Panc1 (cell line): ENCODE measurements at regions of chr18 and their contacts with region 1.

Region 1: GRCh38 chr18:49597157-49597931 is 35.5 kb downstream of the LIPG start:
- DNase-seq: no peak
- ATAC-seq: peak; percentile 88
- H3K4me3 ChIP-seq: no peak overlapping the region
- H3K27ac ChIP-seq: peak overlapping the region; percentile 65
- H3K4me1 ChIP-seq: no peaks in the 10 kb centered on the region
- H3K27me3 ChIP-seq: no peaks in the 10 kb centered on the region
- CTCF ChIP-seq: no peak

Region 2: DNA sequence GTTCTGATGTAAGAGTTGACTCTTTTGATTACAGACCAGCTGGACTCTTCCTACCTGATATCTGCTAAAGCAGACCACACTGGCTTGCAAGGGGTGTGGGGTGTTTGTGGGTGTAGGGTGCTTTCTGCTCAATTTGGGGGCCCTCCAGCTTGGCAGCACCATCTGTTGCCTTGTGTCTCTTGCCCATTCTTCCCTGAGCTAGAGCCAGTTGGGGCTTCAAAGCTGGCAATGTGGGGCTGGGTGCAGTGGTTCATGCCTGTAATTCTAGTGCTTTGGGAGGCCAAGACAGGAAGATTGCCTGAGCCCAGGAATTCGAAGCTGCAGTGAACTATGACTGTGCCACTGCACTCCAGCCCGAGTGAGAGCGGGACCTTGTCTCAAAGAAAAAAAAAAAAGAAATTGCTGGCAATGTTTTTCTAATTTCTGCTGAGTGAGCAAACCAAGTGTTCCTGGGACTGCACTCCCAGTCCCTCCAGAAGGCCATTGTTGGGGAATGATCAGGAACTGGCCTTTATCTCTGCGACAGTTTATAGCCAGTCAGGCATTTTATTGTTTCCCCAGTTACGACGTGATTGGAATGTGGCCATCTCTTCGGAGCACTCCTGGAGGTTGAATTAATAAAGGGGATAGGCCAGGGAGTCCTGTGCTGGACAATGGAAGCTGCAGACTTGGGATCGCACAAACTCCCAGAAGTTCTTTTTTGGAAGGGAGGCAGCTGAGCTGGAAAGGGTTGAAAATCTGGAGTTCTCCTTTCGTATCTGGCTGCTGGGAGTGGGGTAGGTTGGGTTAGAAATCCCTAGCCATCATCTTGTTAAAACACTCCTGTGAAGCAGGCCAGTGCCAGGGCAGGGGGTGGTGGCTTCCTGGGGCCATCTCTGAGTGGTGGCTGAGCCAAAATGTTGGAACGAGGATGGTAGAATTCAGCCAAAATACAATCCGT is 21.7 kb after region 1 on chr18:
- CTCF ChIA-PET with region 1: interaction called, 12 read pairs
- POLR2A ChIA-PET with region 1: no interaction called
- in situ Hi-C with region 1: no loop called
- intact Hi-C with region 1: no loop called
- DNase-seq: no peak
- ATAC-seq: no peak
- H3K4me3 ChIP-seq: no peak overlapping the region
- H3K27ac ChIP-seq: no peak overlapping the region; the same call in 1 of the 2 replicates
- H3K4me1 ChIP-seq: peaks cover 3% of the 10 kb centered on the region
- H3K27me3 ChIP-seq: no peaks in the 10 kb centered on the region
- CTCF ChIP-seq: no peak

Region 3: GRCh38 chr18:49747876-49748275 is 150.5 kb after region 1 on chr18:
- CTCF ChIA-PET with region 1: interaction called, 12 read pairs
- POLR2A ChIA-PET with region 1: no interaction called
- in situ Hi-C with region 1: no loop called
- intact Hi-C with region 1: no loop called
- DNase-seq: no peak
- ATAC-seq: no peak
- H3K4me3 ChIP-seq: no peak overlapping the region
- H3K27ac ChIP-seq: no peak overlapping the region
- H3K4me1 ChIP-seq: no peaks in the 10 kb centered on the region
- H3K27me3 ChIP-seq: no peaks in the 10 kb centered on the region
- CTCF ChIP-seq: no peak